Activated B cell treated with CpG ODN at 0.5 μM for 24 hours (primary cell): ENCODE measurements at regions of chr1 and their contacts with region 1.

Region 1: DNA sequence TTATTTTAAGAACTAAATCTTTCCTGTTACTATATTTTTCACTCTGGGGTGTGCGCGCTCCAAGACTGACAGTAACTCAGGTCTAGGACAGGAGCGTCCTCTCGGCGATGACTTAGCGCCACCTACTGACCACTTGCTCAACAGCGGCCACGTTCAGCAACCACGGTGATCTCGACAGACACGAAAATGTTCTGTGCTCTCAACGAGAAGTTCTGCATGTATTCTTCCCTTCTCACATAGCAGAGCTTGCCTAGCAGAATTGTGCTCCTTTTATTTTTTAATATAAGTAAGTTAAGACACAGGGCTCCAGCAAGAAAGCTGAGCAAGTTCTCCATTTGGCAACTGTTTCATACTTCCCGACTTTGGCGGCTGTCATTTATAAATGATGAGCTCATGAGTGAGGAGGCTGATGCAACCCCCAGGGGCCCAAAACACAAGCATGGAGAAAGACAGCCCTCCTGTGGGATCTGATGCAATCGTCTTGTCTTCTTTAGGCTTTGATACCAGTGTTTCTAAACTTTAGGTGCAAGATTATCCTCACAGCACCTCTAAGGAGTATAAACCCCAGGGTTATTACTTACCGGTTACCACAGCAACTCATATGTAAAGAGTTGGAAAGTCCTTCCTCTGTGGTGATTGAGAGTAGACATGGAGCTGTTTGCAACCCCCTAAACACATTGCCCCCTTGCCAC is 92.6 kb downstream of the HHIPL2 start:
- DNase-seq: peak; percentile 63
- ATAC-seq: peak; percentile 97
- H3K4me3 Mint-ChIP-seq: peak overlapping the region; percentile 1
- H3K27ac Mint-ChIP-seq: peak overlapping the region; percentile 20
- H3K4me1 Mint-ChIP-seq: peaks cover 12% of the 10 kb centered on the region
- H3K27me3 Mint-ChIP-seq: peaks cover 1% of the 10 kb centered on the region
- CTCF ChIP-seq: peak; percentile 85

Region 2: GRCh38 chr1:220810179-220810653 is 1645.1 kb before region 1 on chr1:
- CTCF ChIA-PET with region 1: interaction called, 11 read pairs
- POLR2A ChIA-PET with region 1: no interaction called
- intact Hi-C with region 1: loop called (anchors 1 kb)
- DNase-seq: peak; percentile 54
- ATAC-seq: peak; percentile 99
- H3K4me3 Mint-ChIP-seq: peak overlapping the region; percentile 55
- H3K27ac Mint-ChIP-seq: no peak overlapping the region
- H3K4me1 Mint-ChIP-seq: peaks cover 2% of the 10 kb centered on the region
- H3K27me3 Mint-ChIP-seq: peaks cover 4% of the 10 kb centered on the region
- CTCF ChIP-seq: peak; percentile 96

Region 3: DNA sequence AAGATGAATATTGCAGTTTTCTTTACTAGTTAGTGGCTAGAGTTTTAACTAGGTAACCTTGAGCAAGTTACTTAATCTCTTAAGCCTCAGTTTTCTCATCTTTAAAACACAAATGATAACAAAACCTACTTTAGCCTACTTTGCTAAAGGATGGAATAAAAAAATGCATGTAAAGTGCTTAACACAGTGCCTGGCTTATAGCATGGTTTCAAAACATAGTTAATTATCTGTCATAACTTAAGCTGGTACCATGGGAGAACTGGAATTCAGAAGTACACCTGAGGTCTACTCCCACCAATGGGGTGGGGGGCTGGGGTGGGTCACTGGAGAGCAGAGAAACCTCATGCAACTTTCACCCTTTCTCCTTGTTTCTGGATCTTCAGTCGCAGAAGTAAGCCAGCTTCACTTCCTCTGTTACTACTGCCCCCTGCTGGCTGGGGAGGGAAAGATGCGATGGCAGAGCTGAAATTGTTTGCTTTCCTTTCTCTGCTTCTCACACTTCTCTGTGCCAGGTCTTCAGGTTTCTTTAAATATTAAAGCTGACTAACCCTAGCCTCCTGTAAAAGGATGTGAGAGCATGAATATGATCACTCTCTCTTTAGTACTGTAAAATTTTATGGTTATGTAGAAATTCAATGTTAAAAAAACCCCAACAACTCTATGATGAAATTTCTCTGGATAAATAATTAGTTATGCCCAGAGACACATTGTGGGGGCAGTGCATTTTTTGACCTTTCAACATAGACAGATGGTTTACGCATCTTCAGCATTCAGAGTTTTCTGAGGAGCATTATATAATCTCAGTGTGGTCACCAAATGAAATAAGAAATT is 1251.9 kb before region 1 on chr1:
- CTCF ChIA-PET with region 1: interaction called, 7 read pairs
- POLR2A ChIA-PET with region 1: no interaction called
- intact Hi-C with region 1: loop called (anchors 1 kb)
- DNase-seq: peak; percentile 59
- ATAC-seq: peak; percentile 45
- H3K4me3 Mint-ChIP-seq: no peak overlapping the region
- H3K27ac Mint-ChIP-seq: no peak overlapping the region
- H3K4me1 Mint-ChIP-seq: peaks cover 3% of the 10 kb centered on the region
- H3K27me3 Mint-ChIP-seq: peaks cover 7% of the 10 kb centered on the region
- CTCF ChIP-seq: no peak

Region 4: GRCh38 chr1:221478050-221478949 is 977.0 kb before region 1 on chr1:
- CTCF ChIA-PET with region 1: interaction called, 69 read pairs
- POLR2A ChIA-PET with region 1: interaction called, 8 read pairs
- intact Hi-C with region 1: loop called (anchors 1 kb)
- DNase-seq: peak; percentile 27
- ATAC-seq: peak; percentile 93
- H3K4me3 Mint-ChIP-seq: no peak overlapping the region
- H3K27ac Mint-ChIP-seq: no peak overlapping the region
- H3K4me1 Mint-ChIP-seq: peaks cover 4% of the 10 kb centered on the region
- H3K27me3 Mint-ChIP-seq: peaks cover 4% of the 10 kb centered on the region
- CTCF ChIP-seq: no peak

Region 5: GRCh38 chr1:222095606-222096475 is 359.5 kb before region 1 on chr1:
- CTCF ChIA-PET with region 1: interaction called, 3 read pairs
- POLR2A ChIA-PET with region 1: no interaction called
- intact Hi-C with region 1: loop called (anchors 1 kb)
- DNase-seq: no peak
- ATAC-seq: peak; percentile 82
- H3K4me3 Mint-ChIP-seq: no peak overlapping the region
- H3K27ac Mint-ChIP-seq: no peak overlapping the region
- H3K4me1 Mint-ChIP-seq: no peaks in the 10 kb centered on the region
- H3K27me3 Mint-ChIP-seq: peaks cover 7% of the 10 kb centered on the region
- CTCF ChIP-seq: peak; percentile 53

Region 6: GRCh38 chr1:222283147-222283768 is 172.1 kb before region 1 on chr1:
- CTCF ChIA-PET with region 1: no interaction called
- POLR2A ChIA-PET with region 1: no interaction called
- intact Hi-C with region 1: no loop called
- DNase-seq: no peak
- ATAC-seq: no peak
- H3K4me3 Mint-ChIP-seq: no peak overlapping the region
- H3K27ac Mint-ChIP-seq: no peak overlapping the region
- H3K4me1 Mint-ChIP-seq: no peaks in the 10 kb centered on the region
- H3K27me3 Mint-ChIP-seq: peaks cover 2% of the 10 kb centered on the region
- CTCF ChIP-seq: no peak

Region 7: DNA sequence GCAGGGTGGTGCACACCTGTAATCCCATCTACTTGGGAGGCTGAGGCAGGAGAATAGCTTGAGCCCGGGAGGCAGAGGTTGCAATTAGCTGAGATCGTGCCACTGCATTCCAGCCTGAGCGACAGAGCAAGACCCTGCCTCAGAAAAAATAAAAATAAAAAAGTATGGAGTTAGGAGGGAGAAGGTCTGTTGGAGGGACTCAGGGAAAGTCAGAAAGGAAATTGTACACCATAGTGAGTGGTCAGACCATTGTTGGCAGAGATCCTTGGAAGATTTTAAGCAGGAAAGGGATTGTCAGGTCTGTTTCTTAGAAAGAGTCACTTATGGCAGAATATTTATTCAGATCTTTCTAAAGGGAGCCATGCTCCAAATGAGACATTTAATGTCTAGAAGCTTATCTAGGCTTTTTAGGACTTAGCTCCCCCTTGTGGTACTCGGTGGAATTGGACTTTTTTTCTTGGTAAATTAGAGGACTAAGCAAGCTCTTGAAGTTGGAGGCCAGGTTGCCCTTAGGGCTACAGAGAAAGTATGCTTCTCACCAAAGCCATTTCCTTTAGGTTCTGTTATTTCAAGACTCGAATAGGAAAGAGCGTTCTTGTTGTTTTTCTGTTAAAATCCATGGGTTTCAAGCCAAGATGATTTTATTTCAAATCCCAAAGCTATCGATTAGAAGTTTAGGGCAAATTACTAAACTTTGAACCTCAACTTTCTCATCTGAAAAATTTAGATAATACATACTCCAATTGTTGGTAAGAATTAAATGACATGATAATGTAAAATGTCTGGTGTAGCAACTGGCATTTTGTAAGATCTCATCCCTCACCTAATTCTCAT is 179.1 kb after region 1 on chr1:
- CTCF ChIA-PET with region 1: interaction called, 13 read pairs
- POLR2A ChIA-PET with region 1: no interaction called
- intact Hi-C with region 1: no loop called
- DNase-seq: no peak
- ATAC-seq: peak; percentile 85
- H3K4me3 Mint-ChIP-seq: no peak overlapping the region
- H3K27ac Mint-ChIP-seq: no peak overlapping the region
- H3K4me1 Mint-ChIP-seq: peaks cover 17% of the 10 kb centered on the region
- H3K27me3 Mint-ChIP-seq: no peaks in the 10 kb centered on the region
- CTCF ChIP-seq: no peak

Region 8: GRCh38 chr1:222928212-222928611 is 472.9 kb after region 1 on chr1:
- CTCF ChIA-PET with region 1: no interaction called
- POLR2A ChIA-PET with region 1: no interaction called
- intact Hi-C with region 1: no loop called
- DNase-seq: no peak
- ATAC-seq: no peak
- H3K4me3 Mint-ChIP-seq: no peak overlapping the region
- H3K27ac Mint-ChIP-seq: no peak overlapping the region
- H3K4me1 Mint-ChIP-seq: no peaks in the 10 kb centered on the region
- H3K27me3 Mint-ChIP-seq: no peaks in the 10 kb centered on the region
- CTCF ChIP-seq: no peak